ENCODE measurements at regions of chr12 and their contacts with region 1.

Region 1: DNA sequence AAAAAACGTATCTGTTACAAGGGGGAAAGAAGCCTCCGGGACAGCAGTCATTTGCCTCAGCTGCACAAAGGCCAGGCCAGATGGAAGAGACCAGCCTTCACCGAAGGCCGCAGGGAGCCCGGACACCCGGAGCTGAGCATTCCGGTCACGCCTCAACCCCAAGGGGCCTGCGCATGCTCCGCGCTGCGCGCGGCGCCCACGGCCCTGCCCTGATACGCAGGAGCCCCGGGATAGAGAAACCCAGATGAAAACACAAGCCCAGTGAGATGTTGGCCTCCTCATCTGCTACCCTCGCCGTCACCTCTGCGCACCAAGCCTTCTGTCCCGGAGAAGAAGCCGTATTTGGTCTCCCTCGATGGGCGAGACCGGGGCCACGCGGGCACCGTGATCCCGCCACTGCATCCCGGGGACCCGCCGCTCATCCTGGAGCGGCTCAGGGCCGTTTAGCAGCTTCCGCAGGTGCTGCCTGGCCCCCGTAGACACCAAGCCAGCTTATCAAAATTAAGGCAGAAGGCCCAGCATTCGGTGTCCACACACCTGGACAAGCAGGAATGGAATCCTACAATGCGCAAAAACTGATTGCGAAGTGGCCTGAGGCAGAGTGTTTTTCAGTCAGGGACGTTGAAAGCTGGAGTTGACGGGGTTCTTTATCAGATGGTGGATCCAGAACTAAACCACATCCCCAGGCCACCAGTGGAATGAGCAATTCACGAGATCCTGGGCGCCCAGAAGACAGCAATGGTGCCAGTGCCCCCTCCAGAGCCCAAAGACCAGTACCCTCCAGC is 2.7 kb downstream of the OR8S1 start:
- H3K4me3 ChIP-seq: no peak overlapping the region
- H3K27ac ChIP-seq: no peak overlapping the region
- H3K4me1 ChIP-seq: no peaks in the 10 kb centered on the region
- CTCF ChIP-seq: no peak

Region 2: DNA sequence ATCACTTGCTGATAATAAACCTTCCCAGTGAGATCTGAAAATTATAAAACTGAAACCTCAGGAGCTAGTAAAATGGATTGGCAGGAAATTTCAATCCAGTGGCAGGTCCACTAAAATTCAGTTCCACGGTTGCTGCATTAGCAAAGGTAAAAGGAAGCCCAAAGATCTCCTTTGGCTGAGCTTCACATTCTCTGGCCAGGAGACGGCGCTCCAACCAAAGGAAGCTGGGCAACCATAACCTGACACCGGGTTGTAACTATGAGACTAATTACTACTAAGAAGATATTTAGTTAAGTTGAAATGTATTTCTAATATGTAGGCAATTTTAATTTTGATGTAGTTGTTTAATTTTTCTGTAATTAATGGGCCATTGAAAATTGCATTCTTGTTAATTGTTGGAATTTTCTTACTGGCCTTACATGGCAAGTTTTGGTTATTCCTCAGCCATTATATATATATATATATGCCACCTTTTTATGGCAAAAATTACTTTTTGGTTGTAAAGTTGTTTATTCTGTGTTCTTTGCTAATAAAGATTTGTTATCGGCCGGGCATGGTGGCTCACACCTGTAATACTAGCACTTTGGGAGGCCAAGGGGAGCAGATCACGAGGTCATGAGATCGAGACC is 14.3 kb after region 1 on chr12:
- CTCF ChIA-PET with region 1: interaction called, 11 read pairs
- POLR2A ChIA-PET with region 1: no interaction called
- H3K4me3 ChIP-seq: no peak overlapping the region
- H3K27ac ChIP-seq: no peak overlapping the region
- H3K4me1 ChIP-seq: no peaks in the 10 kb centered on the region
- CTCF ChIP-seq: no peak

Region 3: DNA sequence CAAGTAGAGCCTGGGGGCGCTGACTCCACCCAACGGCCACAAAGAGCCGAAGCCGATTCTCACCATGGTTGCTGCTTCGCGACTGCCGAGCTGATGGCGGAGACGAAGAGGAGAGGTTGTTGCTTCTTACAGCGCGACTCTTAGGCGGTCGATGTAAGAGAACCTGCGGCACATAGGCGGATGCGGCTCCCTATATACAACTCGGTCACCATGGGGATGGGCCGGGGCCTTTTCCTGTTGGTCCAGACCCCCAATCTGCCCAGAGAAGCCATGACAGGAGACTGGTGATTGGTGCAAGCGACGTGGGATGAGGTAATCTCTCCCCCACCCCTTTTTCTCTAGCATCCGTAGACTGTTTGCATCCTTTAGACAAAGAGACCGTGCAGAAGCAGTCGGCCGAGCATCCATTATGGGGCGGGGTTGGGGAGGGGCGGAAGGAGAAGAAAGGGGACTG is 660.9 kb after region 1 on chr12 and contains the start of gene TUBA1A:
- CTCF ChIA-PET with region 1: no interaction called
- POLR2A ChIA-PET with region 1: no interaction called
- H3K4me3 ChIP-seq: peak within 1 kb of the TSS; percentile 86
- H3K27ac ChIP-seq: peak within 1 kb of the TSS; percentile 94
- H3K4me1 ChIP-seq: peaks cover 6% of the 10 kb centered on the region; the same call in 1 of the 2 replicates
- CTCF ChIP-seq: no peak

Measured in HEK293 (cell line).